ENCODE measurements at regions of chr14 and their contacts with region 1.

Region 1: GRCh38 chr14:73943083-73943482 is 6.8 kb downstream of the FAM161B start:
- DNase-seq: no peak
- H3K4me3 ChIP-seq: no peak overlapping the region
- H3K4me3 Mint-ChIP-seq: no peak overlapping the region
- H3K27ac Mint-ChIP-seq: no peak overlapping the region
- H3K4me1 ChIP-seq: peaks cover 23% of the 10 kb centered on the region
- H3K4me1 Mint-ChIP-seq: peaks cover 17% of the 10 kb centered on the region
- H3K27me3 ChIP-seq: peaks cover 3% of the 10 kb centered on the region; the same call in 1 of the 2 replicates
- H3K27me3 Mint-ChIP-seq: peaks cover 13% of the 10 kb centered on the region
- CTCF ChIP-seq: no peak

Region 2: DNA sequence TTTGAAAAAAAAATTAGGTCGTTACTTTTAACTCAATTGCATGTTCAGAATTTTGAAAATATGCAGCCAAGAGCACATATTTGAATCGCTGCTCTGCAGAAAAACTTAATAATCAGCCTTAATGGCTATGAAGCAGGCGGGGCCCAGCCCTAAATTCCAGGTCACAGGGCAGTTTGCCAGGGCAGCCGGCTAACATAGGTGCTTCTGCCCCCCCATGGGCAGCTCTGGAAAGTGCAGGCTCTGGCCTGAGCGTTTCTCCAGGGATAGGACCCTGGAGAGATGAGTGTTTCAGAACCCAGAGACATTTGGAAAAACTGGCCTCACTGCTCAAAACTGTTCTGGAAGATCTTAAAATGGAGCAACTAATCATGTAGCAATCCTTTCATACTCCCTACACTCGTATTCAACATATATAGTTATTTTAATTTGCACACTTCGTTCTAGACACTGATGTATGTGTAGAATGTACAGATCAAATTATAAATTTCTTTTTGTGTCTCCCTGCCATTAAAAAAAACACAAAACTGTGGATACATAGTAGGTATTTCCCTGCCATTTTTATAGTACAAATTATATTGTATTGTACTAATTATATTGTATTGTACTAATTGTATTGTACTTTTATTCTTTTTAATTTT is 117.4 kb before region 1 on chr14:
- CTCF ChIA-PET with region 1: no interaction called
- POLR2A ChIA-PET with region 1: no interaction called
- intact Hi-C with region 1: no loop called
- DNase-seq: peak; percentile 79 to 86
- H3K4me3 ChIP-seq: no peak overlapping the region
- H3K4me3 Mint-ChIP-seq: no peak overlapping the region
- H3K27ac Mint-ChIP-seq: no peak overlapping the region
- H3K4me1 ChIP-seq: peaks cover 4% of the 10 kb centered on the region; the same call in 1 of the 2 replicates
- H3K4me1 Mint-ChIP-seq: peaks cover 8% of the 10 kb centered on the region
- H3K27me3 ChIP-seq: no peaks in the 10 kb centered on the region
- H3K27me3 Mint-ChIP-seq: no peaks in the 10 kb centered on the region
- CTCF ChIP-seq: peak; percentile 89 to 93

Region 3: GRCh38 chr14:74038015-74038859 is 95.2 kb after region 1 on chr14:
- CTCF ChIA-PET with region 1: no interaction called
- POLR2A ChIA-PET with region 1: interaction called, 3 read pairs
- intact Hi-C with region 1: loop called (anchors 5 kb)
- DNase-seq: peak in 1 of 2 experiments; percentile 56
- H3K4me3 ChIP-seq: no peak overlapping the region
- H3K4me3 Mint-ChIP-seq: no peak overlapping the region
- H3K27ac Mint-ChIP-seq: no peak overlapping the region
- H3K4me1 ChIP-seq: no peaks in the 10 kb centered on the region
- H3K4me1 Mint-ChIP-seq: no peaks in the 10 kb centered on the region
- H3K27me3 ChIP-seq: no peaks in the 10 kb centered on the region
- H3K27me3 Mint-ChIP-seq: no peaks in the 10 kb centered on the region
- CTCF ChIP-seq: peak; percentile 65 to 70